ENCODE measurements at regions of chr19 and their contacts with region 1.

Region 1: DNA sequence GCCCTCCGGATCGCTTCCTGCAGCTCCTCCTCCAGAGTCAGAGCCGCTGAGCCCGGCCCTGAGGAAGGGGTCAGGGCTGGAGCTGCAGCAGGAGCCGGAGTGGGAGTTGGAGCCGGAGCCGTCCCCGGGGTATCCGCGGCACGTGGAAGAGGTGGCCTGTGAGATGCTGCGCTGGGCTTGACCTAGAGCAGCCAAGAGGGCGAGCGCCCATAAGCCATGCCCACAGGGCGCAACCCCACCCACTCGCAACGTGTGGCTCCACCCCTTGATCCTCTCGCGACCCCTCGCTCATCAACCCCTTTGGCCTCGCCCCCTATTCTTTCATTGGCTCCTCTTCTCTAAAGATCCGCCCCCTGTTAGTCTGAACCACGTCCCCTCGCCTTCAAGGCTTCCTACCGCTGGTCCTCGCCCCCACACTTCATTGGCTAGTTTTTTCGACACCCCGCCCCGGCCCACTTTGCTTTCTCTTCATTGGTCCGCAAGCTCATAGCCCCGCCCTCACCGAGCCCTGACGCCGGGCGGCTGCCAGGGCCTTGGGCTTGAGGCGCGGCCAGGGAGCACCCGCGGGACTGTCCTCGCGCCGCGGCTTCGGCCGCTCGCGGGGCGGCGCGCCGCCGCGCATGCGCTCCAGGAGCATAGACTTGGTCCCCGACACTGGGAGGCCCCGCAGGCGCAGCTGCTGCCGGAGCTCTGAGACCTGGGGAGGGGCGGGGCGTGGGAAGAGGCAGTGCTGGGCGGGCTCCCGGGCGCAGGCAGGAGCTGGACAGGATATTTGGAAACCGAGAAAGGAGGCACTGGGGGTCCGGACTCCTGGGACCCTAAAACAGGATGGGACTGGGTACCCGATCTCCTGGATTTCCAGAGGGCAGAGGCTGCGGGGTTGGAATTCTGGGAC is 5.4 kb downstream of the MAMSTR start:
- DNase-seq: peak; percentile 99
- ATAC-seq: peak; percentile 92

Region 2: GRCh38 chr19:48637170-48637947 is 76.8 kb before region 1 on chr19 and contains the start of gene DBP:
- intact Hi-C with region 1: loop called (anchors 5 kb)
- DNase-seq: peak; percentile 99
- ATAC-seq: peak; percentile 83
- total RNA-seq, gene DBP: 15.2 TPM

Region 3: GRCh38 chr19:48674921-48675824 is 38.9 kb before region 1 on chr19:
- intact Hi-C with region 1: loop called (anchors 2 kb)
- DNase-seq: peak; percentile 80
- ATAC-seq: peak; percentile 80

Region 4: DNA sequence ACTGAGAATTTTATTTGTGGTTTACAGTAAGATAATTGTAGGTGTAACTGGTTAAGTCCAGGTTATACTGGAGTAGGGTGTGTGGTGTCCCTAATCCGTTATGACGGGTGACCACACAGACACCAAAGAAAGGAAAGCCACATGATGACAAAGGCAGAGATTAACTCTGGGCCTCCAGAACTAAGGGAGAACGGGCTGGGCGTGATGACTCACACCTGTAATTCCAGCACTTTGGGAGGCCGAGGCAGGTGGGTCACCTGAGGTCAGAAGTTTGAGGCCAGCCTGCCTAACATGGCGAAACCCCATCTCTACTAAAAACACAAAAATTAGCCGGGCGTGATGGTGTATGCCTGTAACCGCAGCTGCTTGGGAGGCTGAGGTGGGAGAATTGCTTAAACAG is 28.5 kb before region 1 on chr19:
- intact Hi-C with region 1: no loop called
- DNase-seq: no peak
- ATAC-seq: no peak

Region 5: GRCh38 chr19:48738557-48739399 is 24.7 kb after region 1 on chr19:
- intact Hi-C with region 1: loop called (anchors 1 kb)
- DNase-seq: peak; percentile 95
- ATAC-seq: peak; percentile 94

Region 6: GRCh38 chr19:48752498-48753365 is 38.6 kb after region 1 on chr19 and contains the start of gene FUT1:
- intact Hi-C with region 1: no loop called
- DNase-seq: peak; percentile 77
- ATAC-seq: peak; percentile 80
- total RNA-seq, gene FUT1: 2.1 TPM

Region 7: GRCh38 chr19:48812094-48812929 is 98.2 kb after region 1 on chr19:
- intact Hi-C with region 1: no loop called
- DNase-seq: peak; percentile 93
- ATAC-seq: peak; percentile 91

Measured in Right ventricle myocardium inferior (tissue), 1 donor.